ENCODE measurements at regions of chr5 and their contacts with region 1.

Region 1: GRCh38 chr5:87267574-87268125 is at the start of gene RASA1:
- DNase-seq: peak; percentile 84
- ATAC-seq: peak; percentile 81
- H3K4me3 Mint-ChIP-seq: peak within 1 kb of the TSS; percentile 100
- H3K27ac Mint-ChIP-seq: peak within 1 kb of the TSS; percentile 99
- H3K4me1 Mint-ChIP-seq: peaks cover 21% of the 10 kb centered on the region
- H3K27me3 Mint-ChIP-seq: no peaks in the 10 kb centered on the region
- CTCF ChIP-seq: no peak
- total RNA-seq, gene RASA1: 17.6 to 19.3 TPM

Region 2: DNA sequence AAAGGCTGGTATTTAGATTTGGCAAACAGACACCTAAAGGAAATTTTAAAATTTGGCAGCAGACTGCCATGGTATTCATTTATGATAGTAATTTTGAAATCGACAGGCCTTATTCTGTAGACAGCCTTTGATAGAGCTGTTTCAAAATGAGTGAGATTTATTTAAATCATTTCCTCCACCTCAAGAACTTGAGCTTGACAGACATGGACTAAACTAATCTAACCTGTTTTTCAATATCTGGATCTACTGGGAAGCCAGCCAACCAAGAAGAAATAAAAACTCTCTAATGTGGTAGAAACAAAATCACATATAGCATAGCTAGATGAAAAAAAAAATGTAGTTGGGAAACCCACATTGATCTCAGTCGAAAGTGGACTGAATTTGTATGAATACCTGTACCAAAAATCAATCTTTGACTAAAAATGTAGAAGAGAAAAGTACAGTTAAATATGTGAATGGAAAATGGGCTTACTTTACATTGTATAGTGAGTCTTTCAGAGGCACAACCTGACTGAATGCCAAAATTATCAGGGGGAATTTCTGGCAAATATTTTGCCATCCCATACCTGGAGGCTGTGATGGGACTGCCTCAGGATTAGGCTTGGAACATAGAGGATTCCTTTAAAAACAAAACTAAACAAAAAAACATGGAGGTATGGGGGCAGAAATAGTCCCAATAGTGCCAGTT is 56.8 kb before region 1 on chr5:
- CTCF ChIA-PET with region 1: no interaction called
- POLR2A ChIA-PET with region 1: no interaction called
- intact Hi-C with region 1: no loop called
- DNase-seq: no peak
- ATAC-seq: no peak
- H3K4me3 Mint-ChIP-seq: no peak overlapping the region
- H3K27ac Mint-ChIP-seq: no peak overlapping the region
- H3K4me1 Mint-ChIP-seq: peaks cover 9% of the 10 kb centered on the region
- H3K27me3 Mint-ChIP-seq: no peaks in the 10 kb centered on the region
- CTCF ChIP-seq: no peak

Region 3: GRCh38 chr5:87393331-87393730 is 125.7 kb after region 1 on chr5:
- CTCF ChIA-PET with region 1: no interaction called
- POLR2A ChIA-PET with region 1: no interaction called
- intact Hi-C with region 1: loop called (anchors 10 kb)
- DNase-seq: no peak
- ATAC-seq: no peak
- H3K4me3 Mint-ChIP-seq: no peak overlapping the region
- H3K27ac Mint-ChIP-seq: no peak overlapping the region
- H3K4me1 Mint-ChIP-seq: peaks cover 23% of the 10 kb centered on the region
- H3K27me3 Mint-ChIP-seq: no peaks in the 10 kb centered on the region
- CTCF ChIP-seq: no peak